HEK293 (cell line): ENCODE measurements at regions of chr2 and their contacts with region 1.

Region 1: DNA sequence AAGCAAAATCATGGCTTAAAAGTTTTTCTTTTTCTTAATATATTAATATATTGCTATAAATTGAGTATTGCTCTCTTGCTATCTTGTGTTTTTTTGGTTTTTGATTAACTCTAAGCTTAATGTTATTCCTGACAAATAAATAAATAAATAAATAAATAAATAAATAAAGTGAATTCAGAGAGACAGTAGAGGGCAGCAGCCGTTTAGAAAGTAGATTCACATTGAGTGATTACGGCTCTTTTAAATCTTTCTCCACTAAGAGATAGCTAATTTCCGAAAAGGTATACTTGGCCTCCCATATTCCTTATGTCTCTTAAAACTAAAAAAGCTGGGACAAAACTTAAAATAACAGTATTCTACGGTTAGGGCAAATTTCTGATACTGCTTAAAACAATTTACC is 34.3 kb downstream of the MSH2 start:
- H3K4me3 ChIP-seq: no peak overlapping the region
- H3K27ac ChIP-seq: no peak overlapping the region
- H3K4me1 ChIP-seq: no peaks in the 10 kb centered on the region
- CTCF ChIP-seq: no peak

Region 2: DNA sequence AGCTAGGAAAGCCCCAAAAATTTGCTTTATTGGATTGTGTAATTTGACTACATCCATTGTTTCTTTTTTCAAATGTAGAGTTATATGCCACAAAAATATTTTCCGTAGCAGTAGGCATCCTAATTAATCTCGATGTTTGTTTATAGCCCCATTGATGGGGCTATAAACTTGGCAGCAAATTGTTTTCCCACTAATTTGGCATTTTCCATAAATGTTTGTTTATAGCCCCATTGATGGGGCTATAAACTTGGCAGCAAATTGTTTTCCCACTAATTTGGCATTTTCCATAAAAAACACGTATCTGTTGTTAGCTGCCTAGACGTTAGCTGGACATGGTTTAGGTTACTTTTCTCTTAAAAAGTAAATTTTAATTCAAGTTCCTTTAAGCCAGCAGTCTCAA is 10.5 kb before region 1 on chr2:
- CTCF ChIA-PET with region 1: interaction called, 10 read pairs
- POLR2A ChIA-PET with region 1: no interaction called
- H3K4me3 ChIP-seq: no peak overlapping the region
- H3K27ac ChIP-seq: no peak overlapping the region
- H3K4me1 ChIP-seq: no peaks in the 10 kb centered on the region
- CTCF ChIP-seq: no peak

Region 3: GRCh38 chr2:47452761-47453160 is 15.5 kb after region 1 on chr2:
- CTCF ChIA-PET with region 1: interaction called, 10 read pairs
- POLR2A ChIA-PET with region 1: no interaction called
- H3K4me3 ChIP-seq: no peak overlapping the region
- H3K27ac ChIP-seq: no peak overlapping the region
- H3K4me1 ChIP-seq: no peaks in the 10 kb centered on the region
- CTCF ChIP-seq: no peak

Region 4: GRCh38 chr2:47528874-47529273 is 91.6 kb after region 1 on chr2:
- CTCF ChIA-PET with region 1: no interaction called
- POLR2A ChIA-PET with region 1: no interaction called
- H3K4me3 ChIP-seq: no peak overlapping the region
- H3K27ac ChIP-seq: no peak overlapping the region
- H3K4me1 ChIP-seq: peaks cover 5% of the 10 kb centered on the region
- CTCF ChIP-seq: no peak

Region 5: DNA sequence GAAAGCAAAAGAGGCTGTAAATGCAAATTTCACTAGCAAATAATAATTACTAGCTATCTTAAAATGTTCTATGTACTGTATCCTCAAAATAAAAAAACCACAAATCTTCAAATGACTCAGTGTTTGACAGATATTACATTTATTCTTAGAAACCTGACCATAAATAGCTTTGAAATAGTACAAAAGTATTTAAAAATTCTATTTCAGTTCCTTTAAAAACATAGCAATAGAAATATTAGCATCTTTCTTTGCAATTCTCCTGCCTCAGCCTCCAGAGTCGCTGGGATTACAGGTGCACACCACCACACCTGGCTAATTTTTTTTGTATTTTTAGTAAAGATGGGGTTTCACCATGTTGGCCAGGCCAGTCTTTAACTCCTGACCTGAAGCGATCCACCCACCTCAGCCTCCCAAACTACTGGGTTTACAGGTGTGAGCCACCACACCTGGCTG is 396.3 kb after region 1 on chr2:
- CTCF ChIA-PET with region 1: no interaction called
- POLR2A ChIA-PET with region 1: no interaction called
- H3K4me3 ChIP-seq: no peak overlapping the region
- H3K27ac ChIP-seq: no peak overlapping the region
- H3K4me1 ChIP-seq: no peaks in the 10 kb centered on the region
- CTCF ChIP-seq: no peak